Endothelial cell of umbilical vein (primary cell): ENCODE measurements at regions of chr15 and their contacts with region 1.

Region 1: DNA sequence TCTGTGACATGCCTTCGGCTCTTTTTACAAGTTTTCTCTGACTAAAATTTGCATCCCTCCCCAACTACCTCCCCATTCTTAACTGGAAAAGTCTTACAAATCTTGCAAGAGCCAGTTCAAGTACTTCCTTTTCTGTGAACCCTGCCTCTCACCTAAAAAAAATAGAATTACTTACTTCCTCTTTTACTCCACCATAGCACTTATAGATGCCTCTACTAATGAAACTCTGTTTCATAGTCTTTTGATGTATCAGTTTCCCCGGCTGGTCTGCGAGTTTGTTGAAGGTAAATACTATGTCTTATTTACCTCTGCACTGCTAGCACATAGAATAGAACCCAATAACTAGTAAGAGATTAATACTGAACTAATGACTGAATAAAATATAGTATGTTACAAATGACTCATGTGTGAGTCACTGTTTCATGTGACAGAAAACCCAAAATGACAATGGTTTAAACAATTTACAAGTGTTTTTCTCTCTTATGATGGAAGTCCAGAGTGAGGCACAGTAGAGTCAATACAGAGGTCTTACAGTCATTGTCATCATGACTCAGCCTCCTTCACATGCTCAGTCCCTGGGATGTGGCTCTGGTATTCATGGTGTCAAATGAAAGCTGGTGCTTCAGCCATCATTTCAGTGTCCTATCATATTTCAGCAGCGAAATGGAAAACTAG is 393.5 kb downstream of the RSL24D1 start:
- DNase-seq: no peak
- H3K4me3 ChIP-seq: no peak overlapping the region
- H3K27ac ChIP-seq: no peak overlapping the region
- H3K4me1 ChIP-seq: no peaks in the 10 kb centered on the region
- H3K27me3 ChIP-seq: no peaks in the 10 kb centered on the region
- CTCF ChIP-seq: no peak
- POLR2A ChIP-seq: no peak

Region 2: DNA sequence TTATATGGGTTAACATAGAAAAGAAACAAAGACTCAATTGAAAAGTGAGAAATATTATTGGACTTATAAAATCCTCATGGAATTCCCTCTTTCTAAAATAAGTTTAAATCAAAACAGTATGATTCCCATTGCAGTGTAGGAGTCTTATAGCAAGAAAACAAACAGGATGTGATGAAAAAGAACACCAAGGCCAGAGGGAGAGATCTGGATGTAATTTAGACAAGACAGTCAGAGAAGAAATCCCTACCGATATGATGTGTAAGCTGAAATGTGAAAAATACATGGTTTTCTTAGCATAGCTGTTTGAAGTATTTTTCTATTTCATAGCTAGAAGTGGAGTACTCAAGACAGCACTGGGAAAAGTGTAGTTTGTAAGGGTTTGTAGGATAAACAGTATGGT is 128.0 kb before region 1 on chr15:
- CTCF ChIA-PET with region 1: no interaction called
- POLR2A ChIA-PET with region 1: no interaction called
- dilution Hi-C with region 1: no loop called
- intact Hi-C with region 1: no loop called
- DNase-seq: no peak
- H3K4me3 ChIP-seq: no peak overlapping the region
- H3K27ac ChIP-seq: no peak overlapping the region
- H3K4me1 ChIP-seq: no peaks in the 10 kb centered on the region
- H3K27me3 ChIP-seq: no peaks in the 10 kb centered on the region
- CTCF ChIP-seq: no peak
- POLR2A ChIP-seq: no peak

Region 3: DNA sequence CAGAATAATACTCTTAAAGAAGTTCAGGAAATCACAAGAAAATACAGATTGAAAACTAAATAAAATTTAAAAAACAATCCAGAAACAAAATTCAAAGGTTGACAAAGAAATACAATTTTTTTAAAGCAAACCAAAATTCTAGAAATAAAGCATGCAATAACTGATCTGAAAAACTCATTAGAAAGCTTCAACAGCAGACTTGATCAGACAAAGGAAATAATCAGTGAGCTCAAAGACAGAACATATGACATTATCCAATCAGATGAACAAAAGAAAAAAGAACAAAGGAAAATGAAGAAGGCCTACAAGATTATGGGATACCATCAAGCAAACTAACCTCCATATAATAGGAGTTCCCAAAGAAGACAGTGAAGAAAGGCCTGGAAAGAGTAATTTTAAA is 56.7 kb after region 1 on chr15:
- CTCF ChIA-PET with region 1: no interaction called
- POLR2A ChIA-PET with region 1: no interaction called
- dilution Hi-C with region 1: no loop called
- intact Hi-C with region 1: loop called (anchors 10 kb)
- DNase-seq: no peak
- H3K4me3 ChIP-seq: no peak overlapping the region
- H3K27ac ChIP-seq: no peak overlapping the region
- H3K4me1 ChIP-seq: no peaks in the 10 kb centered on the region
- H3K27me3 ChIP-seq: no peaks in the 10 kb centered on the region
- CTCF ChIP-seq: no peak
- POLR2A ChIP-seq: no peak